Right ventricle myocardium inferior (tissue), 1 donor: ENCODE measurements at regions of chr19 and their contacts with region 1.

Region 1: DNA sequence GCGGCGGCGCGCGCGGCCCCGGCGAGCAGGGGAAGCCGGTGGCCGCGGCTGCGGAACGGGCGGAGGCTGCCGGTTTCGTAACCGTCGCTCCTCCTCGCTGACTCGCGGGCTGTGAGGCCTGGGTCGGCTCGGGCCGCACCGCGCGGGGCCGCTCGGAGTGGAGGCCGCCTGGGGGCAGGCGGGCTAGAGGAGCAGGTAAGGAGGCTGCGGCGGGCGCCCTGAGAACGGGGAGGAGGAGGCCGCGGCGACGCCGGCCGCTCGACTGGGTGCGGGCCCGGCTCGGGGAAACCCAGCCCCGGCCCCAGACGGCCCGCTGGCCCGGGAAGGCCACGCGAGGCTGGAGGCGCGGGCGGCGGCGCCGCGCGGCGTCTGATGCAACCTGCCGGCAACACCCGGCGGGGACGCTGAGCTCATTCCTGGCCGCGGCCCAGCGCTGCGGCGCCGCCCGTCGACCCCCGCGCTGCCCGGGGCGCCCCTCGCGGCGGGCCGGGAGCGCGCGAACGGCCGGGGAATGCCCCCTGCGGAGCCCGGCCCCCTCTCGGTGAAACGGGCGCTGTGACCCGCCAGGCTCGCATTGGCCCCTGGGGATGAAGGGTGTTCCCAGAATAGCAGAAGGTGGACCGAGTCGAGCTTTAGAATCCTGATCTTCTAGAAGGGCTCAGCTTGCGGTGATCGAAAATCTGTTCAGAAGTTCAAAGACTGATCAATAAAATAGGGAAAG is at the start of gene CEBPG:
- DNase-seq: no peak
- ATAC-seq: peak; percentile 32
- total RNA-seq, gene CEBPG: 17.5 TPM

Region 2: DNA sequence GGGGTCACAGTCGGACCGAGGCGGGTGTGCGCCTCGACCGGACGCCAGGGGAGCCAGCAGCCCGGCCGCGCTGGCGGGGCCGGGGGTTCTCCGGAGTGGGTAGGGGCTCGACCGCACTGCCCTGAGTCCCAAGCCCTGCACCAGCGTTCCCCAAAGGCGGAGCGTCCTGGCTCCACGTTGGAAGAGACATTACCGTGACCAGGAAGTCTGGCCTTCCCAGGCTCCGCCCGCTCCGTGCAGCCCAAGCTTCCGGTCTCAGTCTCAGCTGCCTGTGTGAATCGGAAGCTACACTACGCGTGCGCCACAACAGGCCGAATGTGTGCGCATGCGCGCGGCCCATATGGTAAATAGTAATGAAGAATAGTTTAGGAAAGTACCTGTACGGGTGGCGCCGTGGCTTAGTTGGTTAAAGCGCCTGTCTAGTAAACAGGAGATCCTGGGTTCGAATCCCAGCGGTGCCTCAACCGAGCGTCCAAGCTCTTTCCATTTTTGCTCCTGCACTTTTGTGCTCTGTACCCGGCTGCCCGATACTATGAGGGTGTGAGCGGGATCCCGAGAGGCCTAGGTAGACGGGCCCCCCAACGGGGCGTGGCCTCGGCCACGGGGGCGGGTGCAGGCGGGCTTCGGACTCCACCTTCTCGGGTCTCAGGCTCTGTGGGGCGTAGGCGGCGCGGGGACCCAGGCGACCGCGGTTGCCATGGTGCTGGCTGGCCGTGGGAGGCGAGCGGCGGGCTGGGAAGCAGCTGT is 197.0 kb before region 1 on chr19:
- intact Hi-C with region 1: loop called (anchors 5 kb)
- DNase-seq: peak; percentile 99
- ATAC-seq: peak; percentile 95

Region 3: DNA sequence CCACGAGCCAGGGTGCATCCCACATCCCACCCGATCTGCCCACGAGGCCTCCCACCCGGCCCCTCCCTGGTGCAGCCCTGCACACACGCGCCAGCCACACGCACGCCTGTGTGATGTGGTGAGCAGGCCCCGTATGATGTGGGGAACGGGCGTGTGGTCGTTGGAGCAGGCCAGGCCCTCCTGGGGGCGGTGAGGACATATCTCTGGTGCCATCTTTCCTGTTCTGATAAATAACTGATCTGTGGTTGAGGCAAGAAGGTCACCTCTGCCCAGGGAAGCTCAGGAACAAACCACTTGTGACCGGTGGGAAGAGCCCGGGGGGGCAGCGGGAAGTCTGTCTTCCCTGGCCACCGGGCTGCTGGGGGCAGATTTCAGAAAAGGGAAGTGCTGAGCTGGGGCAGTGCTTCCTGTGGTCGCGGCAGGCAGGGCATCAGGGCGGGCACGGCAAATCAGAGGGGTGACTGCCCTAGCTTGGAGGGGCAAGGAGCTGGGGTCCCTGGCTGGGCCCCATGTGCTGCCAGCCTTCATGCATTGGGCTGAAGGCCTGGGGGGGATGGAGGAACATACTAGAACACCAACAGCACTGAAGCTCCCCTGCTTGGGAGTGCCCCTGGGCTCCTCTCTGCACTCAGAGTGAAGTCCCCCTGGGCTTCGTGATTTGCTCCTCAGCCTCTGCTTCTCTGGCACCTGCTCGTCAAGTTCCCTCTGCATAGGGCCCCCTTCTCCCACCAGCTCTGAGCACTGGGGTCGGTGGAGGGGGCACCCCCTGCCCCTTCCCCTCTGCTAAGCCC is 113.0 kb before region 1 on chr19:
- intact Hi-C with region 1: no loop called
- DNase-seq: no peak
- ATAC-seq: peak; percentile 45

Region 4: DNA sequence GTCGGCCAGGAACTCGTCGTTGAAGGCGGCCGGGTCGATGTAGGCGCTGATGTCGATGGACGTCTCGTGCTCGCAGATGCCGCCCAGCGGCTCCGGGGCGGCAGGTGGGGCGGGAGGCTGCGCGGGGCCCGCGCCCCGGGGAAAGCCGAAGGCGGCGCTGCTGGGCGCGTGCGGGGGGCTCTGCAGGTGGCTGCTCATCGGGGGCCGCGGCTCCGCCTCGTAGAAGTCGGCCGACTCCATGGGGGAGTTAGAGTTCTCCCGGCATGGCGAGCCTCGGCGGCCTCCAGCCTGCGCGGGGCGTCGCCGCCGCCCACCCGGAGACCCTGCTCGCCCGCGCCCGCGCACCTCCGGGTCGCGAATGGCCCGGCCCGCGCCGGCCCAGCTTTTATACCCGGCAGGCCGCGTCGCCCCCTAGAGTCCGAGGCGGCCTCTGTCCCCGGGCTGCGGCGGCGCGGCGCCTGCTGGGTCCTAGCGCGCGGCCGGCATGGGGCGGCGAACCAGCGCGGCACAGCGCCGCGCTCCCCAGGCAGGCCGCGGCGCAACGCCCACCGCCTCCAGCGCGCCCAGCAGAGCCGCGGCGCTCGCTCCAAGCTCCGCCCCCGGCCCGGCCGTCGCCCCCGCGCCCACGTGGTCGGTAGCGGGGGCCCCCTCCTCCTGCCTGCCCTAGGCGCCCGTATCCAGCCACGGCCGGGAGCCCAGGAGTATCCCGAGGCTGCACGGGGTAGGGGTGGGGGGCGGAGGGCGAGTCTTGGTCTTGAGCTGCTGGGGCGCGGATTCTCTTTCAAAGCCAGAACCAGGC is 71.5 kb before region 1 on chr19 and contains the start of gene CEBPA:
- intact Hi-C with region 1: loop called (anchors 5 kb)
- DNase-seq: peak; percentile 95
- ATAC-seq: peak; percentile 91
- total RNA-seq, gene CEBPA: 4.9 TPM

Region 5: GRCh38 chr19:33388725-33389420 is 15.0 kb after region 1 on chr19:
- intact Hi-C with region 1: loop called (anchors 2 kb)
- DNase-seq: peak; percentile 76
- ATAC-seq: peak; percentile 52

Region 6: GRCh38 chr19:33416307-33417215 is 42.7 kb after region 1 on chr19:
- intact Hi-C with region 1: no loop called
- DNase-seq: peak; percentile 72
- ATAC-seq: peak; percentile 27